ENCODE measurements at regions of chr19 and their contacts with region 1.

Region 1: DNA sequence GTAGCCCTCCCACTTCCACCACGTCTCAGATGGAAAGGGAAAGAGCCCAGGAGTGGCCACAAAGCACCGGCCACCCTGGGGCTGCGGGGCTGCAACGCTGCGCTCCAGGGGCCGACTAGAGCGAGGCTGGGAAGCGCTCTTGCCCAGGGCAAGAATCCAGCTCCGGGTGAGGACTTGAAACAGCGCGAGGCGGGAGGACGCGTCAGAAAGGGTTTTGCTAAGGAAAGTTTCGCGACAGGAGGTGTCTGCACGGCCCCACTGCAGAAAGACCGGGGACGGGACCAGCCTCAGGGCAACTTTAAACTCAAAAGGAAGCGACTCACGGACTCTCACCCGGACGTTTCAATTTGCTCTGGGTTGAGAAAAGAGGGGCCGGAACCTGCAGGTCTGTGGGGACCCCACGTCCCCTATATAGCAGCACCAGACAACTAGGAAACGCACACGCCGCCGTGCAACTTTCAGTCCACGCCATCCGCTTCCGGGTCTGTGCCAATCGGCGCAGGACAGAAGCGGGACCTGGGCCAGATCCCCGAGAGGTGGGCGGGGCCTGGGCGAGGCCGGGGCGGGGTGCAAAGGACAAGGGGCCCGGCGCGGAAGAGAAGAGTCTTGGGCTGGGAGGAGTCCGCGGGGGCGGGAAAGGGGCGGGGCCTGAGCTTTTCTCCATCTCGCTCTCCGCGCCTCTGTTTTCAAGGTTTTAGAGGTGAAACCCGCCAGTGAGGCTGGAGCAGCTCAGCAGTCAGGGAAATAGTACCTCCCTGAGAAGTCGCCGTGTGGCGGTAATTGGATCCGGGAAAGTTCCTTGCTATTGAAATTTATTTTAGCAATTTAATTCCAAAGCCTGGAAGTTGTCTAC is at the start of gene ZNF816:
- DNase-seq: peak; percentile 99
- H3K4me3 Mint-ChIP-seq: peak within 1 kb of the TSS; percentile 98
- H3K27ac Mint-ChIP-seq: peak within 1 kb of the TSS; percentile 93
- H3K4me1 Mint-ChIP-seq: peaks cover 25% of the 10 kb centered on the region
- H3K27me3 Mint-ChIP-seq: no peaks in the 10 kb centered on the region
- total RNA-seq, gene ZNF816: 7.0 and 9.4 TPM in 2 replicates

Region 2: DNA sequence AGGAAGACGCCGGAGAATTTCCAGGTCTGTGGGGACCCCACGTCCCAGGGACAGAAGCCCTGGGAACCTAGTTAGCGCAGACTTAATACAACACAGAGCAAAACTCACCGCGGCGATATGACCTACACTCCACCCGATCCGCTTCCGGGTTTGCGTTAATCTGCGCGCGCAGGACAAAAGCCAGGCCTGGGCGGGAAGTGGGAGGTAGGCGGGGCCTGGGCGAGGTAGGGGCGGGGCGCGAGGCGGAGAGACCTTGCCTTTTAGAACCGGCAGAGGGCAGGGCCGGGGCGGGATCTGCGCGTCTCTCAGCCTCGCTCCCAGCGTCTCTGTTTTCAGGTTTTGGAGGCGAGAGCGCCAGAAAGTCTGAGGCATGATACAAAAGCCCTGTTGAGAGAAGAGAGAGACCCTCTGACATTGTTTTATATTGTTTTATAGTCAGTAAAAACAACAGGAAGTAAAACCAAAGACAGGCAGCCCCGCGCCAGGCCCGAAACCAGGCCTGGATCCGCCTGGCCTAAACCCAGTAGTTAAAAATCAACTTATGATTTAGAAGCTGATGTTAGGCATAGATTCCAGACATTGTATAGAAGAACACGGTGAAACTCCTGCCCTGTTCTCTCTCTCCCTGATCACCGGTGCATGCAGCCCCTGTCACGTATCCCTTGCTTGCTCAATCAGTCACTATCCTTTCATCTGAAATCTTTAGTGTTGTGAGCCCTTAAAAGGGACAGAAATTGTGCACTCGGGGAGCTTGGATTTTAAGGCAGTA is 227.5 kb before region 1 on chr19 and contains the start of gene ZNF611:
- intact Hi-C with region 1: loop called (anchors 1 kb)
- DNase-seq: peak; percentile 97
- H3K4me3 Mint-ChIP-seq: peak within 1 kb of the TSS; percentile 91
- H3K27ac Mint-ChIP-seq: peak within 1 kb of the TSS; percentile 92
- H3K4me1 Mint-ChIP-seq: peaks cover 27% of the 10 kb centered on the region
- H3K27me3 Mint-ChIP-seq: no peaks in the 10 kb centered on the region
- total RNA-seq, gene ZNF611: 17.0 and 21.0 TPM in 2 replicates

Region 3: DNA sequence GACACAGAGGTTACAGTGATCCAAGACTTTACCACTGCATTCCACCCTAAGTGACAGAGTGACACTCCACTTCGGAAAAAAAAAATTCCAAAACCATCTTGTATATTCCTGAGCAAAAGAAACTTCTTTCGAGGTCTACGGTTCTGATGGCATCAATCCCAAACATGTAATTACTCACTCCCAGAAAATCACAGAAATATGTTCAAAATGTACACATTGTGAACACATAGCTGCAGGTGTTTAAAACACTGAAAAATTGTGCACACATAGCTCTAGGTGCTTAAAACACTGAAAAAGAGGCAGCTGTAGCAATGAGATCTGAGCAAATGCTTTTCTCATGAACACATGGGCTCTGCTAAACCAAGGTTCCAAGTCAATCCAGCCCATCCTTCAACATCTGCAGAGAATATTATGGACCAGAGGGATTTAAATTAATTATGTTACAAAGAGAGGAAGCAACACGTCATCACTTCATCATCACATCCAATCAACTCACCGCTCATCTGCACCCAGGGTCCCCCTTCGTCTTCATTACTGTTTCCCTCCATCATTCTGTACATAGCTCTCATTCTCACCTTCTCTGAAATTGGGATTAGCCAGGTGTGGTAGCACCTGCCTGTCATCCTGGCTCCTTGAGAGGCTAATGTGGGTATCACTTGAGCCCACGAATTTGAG is 91.0 kb before region 1 on chr19:
- intact Hi-C with region 1: no loop called
- DNase-seq: no peak
- H3K4me3 Mint-ChIP-seq: no peak overlapping the region
- H3K27ac Mint-ChIP-seq: no peak overlapping the region
- H3K4me1 Mint-ChIP-seq: no peaks in the 10 kb centered on the region
- H3K27me3 Mint-ChIP-seq: no peaks in the 10 kb centered on the region

Region 4: DNA sequence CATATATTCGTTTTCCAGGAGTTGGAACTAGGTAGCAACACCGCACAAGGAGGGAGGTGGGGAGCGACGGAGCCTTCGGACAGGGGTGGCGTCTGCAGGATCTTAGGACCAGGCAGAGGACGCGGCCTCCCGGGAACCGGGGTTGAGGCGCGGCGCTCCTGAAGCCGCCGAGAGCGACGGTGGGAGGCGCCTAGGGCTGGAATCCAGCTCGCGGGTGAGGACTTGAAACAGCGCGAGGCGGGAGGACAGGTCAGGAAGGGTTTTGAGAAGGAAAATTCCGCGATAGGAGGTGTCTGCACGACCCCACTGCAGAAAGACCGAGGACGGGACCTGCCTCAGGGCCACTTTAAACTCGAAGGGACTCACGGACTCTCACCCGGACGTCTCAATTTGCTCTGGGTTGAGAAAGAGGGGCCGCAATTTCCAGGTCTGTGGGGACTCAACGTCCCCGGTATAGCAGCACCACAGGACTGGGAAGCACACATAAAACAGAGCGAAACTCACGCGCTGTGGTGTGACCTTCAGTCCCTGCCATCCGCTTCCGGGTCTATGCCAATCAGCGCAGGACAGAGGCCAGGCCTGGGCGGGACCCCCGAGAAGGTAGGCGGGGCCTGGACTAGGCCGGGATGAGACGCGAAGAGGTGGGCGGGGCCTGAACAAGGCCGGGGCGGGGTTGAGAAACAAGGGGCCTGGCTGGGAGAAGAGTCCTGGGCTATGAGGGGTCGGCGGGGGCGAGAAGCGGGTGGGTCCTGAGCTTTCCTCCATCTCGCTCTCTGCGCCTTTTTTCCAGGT is 65.3 kb before region 1 on chr19 and contains the start of gene ZNF320:
- intact Hi-C with region 1: loop called (anchors 1 kb)
- DNase-seq: peak; percentile 90
- H3K4me3 Mint-ChIP-seq: peak within 1 kb of the TSS; percentile 92
- H3K27ac Mint-ChIP-seq: peak within 1 kb of the TSS; percentile 87
- H3K4me1 Mint-ChIP-seq: peaks cover 4% of the 10 kb centered on the region
- H3K27me3 Mint-ChIP-seq: no peaks in the 10 kb centered on the region
- total RNA-seq, gene ZNF320: 10.5 and 11.0 TPM in 2 replicates

Region 5: GRCh38 chr19:52936151-52936953 is 26.3 kb before region 1 on chr19:
- intact Hi-C with region 1: no loop called
- DNase-seq: no peak
- H3K4me3 Mint-ChIP-seq: no peak overlapping the region
- H3K27ac Mint-ChIP-seq: no peak overlapping the region
- H3K4me1 Mint-ChIP-seq: peaks cover 31% of the 10 kb centered on the region
- H3K27me3 Mint-ChIP-seq: peaks cover 1% of the 10 kb centered on the region

Region 6: DNA sequence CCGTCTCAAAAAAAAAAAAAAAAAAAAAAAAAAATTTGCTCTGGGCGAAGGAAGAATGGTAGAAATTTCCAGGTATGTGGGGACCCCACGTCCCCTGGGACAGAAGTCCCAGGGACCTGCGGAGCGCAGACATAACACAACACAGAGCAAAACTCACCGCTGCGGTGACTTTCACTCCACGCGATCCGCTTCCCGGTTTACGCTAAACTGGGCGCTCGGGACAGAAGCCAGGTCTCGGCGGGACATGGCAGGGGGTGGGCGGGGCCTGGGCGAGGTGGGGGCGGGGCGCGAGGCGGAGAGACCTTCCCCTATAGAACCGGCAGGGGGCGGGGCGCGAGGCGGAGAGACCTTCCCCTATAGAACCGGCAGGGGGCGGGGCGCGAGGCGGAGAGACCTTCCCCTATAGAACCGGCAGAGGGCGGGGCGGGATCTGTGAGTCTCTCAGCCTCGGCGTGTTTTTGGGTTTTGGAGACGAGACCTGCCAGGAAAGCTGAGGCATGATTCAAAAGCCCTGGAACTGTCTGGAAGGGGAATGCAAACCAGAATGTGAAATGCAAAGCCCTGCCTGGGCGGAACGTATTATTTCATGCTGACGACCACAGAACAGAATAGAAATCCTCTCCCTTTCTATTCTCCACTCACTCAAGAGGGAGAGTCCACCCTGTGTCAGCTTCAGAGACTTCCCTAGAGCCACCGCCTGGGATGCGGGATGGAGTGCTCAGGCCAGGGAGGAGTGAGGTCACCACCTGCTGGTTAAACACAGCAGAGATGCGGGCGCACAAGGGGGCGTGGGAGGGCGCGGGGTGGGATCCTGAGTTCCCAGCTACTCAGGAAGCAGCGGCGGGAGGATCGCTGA is 30.9 kb after region 1 on chr19:
- intact Hi-C with region 1: loop called (anchors 1 kb)
- DNase-seq: peak; percentile 79
- H3K4me3 Mint-ChIP-seq: peak overlapping the region; percentile 82
- H3K27ac Mint-ChIP-seq: no peak overlapping the region
- H3K4me1 Mint-ChIP-seq: peaks cover 6% of the 10 kb centered on the region
- H3K27me3 Mint-ChIP-seq: peaks cover 4% of the 10 kb centered on the region

Region 7: DNA sequence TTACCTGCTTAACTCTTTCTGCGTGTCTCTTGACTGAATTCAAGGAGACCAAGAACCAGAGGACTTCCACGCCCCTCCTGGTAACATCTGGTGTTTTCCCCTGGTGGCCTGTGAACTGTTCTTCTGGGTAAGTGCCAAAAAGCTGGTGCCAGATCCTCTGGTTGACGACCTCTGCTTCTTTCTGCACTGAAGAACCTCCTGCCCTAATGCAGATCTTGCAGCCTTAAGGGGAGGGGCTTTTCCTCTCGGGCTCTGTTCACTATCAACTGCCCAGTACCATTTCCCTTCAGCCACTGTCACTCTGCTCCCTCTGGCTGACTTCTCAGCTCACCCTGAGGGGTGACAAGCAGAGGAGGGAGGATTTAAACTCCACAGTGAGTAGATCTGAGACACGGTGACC is 45.0 kb after region 1 on chr19:
- intact Hi-C with region 1: no loop called
- DNase-seq: no peak
- H3K4me3 Mint-ChIP-seq: no peak overlapping the region
- H3K27ac Mint-ChIP-seq: no peak overlapping the region
- H3K4me1 Mint-ChIP-seq: no peaks in the 10 kb centered on the region
- H3K27me3 Mint-ChIP-seq: no peaks in the 10 kb centered on the region

Region 8: GRCh38 chr19:53394974-53395839 is 432.6 kb after region 1 on chr19 and contains the start of gene ZNF765:
- intact Hi-C with region 1: loop called (anchors 10 kb)
- DNase-seq: peak; percentile 93
- H3K4me3 Mint-ChIP-seq: peak within 1 kb of the TSS; percentile 98
- H3K27ac Mint-ChIP-seq: peak within 1 kb of the TSS; percentile 85
- H3K4me1 Mint-ChIP-seq: peaks cover 27% of the 10 kb centered on the region
- H3K27me3 Mint-ChIP-seq: no peaks in the 10 kb centered on the region
- total RNA-seq, gene ZNF765: 9.2 and 10.8 TPM in 2 replicates